ENCODE measurements at regions of chr5 and their contacts with region 1.

Region 1: DNA sequence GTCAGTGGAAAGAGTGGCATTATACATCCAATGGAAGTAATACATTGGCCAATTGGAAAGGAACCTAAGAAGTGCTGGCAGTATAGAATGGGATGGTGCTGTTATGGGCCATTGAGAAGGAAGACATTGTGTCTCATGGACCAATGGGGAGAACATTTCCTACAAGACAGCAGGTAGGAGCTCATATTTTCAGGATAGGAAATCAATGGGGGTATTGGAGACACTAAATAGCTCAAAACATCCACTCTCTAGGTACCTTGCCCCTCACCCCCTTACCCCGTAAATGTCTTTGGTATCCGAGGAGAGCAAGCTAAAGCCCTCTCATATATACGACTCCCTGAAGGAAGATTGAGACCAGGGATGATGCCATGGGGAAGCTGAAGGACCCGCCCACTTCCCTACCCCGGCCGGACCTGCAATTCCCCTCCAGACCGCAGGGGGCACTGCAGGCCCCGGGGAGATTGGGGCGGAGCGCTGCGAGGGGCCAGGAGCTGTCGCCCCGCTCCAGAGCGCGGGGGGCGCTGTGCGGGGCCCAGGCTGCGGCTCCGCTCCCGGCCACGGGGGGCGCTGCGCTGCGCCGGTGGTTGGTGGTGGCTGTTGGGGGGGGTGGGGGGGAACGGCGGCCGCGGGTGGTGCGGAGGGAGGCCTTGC is at the start of gene KDM3B:
- DNase-seq: peak; percentile 93
- H3K4me3 Mint-ChIP-seq: peak within 1 kb of the TSS; percentile 100
- H3K27ac Mint-ChIP-seq: peak within 1 kb of the TSS; percentile 97
- H3K4me1 Mint-ChIP-seq: peaks cover 51% of the 10 kb centered on the region
- H3K27me3 Mint-ChIP-seq: peaks cover 3% of the 10 kb centered on the region
- total RNA-seq, gene KDM3B: 55.0 and 59.3 TPM in 2 replicates

Region 2: GRCh38 chr5:138331449-138332368 is 20.5 kb before region 1 on chr5 and contains the start of gene CDC25C:
- intact Hi-C with region 1: loop called (anchors 1 kb)
- DNase-seq: peak; percentile 97
- H3K4me3 Mint-ChIP-seq: peak within 1 kb of the TSS; percentile 85
- H3K27ac Mint-ChIP-seq: peak within 1 kb of the TSS; percentile 82
- H3K4me1 Mint-ChIP-seq: peaks cover 24% of the 10 kb centered on the region
- H3K27me3 Mint-ChIP-seq: no peaks in the 10 kb centered on the region
- total RNA-seq, gene CDC25C: 5.3 and 5.6 TPM in 2 replicates

Region 3: DNA sequence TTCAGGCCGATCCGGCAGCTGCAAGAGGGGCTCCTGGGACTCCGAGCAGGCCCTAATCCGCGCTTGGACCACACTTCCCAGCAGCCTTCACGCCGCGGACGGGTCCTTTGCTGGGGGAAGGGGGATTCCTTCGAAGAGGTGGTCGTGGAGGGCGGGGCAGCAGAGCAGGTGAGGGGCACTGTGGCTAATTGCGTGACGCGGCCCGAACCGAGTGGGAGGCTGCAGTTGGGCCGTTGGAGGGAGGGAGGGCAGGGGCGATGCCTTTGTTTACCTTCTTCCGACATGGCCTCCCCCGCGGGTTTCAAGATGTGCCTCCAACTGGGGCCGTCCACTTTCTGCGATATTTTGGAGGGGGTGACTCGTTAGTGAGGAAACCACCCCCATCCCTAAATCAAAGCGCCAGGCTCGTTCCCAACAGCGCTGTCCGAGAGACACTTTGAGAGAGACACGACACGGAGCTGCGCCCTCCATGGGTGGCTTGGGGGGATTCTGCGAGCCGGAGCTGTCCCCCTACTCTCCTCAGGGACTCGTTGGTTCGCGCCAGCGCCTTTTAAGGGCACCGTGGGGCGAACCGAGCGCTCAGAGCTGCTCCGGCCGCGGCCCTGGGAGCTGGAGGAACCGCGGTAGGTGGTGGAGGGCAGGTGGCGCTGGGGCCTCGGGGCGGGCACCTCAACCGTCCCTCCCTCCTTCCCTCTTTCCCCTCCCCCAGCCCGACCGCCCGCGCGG is 14.3 kb before region 1 on chr5 and contains the start of gene FAM53C:
- intact Hi-C with region 1: loop called (anchors 1 kb)
- DNase-seq: peak; percentile 90
- H3K4me3 Mint-ChIP-seq: peak within 1 kb of the TSS; percentile 94
- H3K27ac Mint-ChIP-seq: peak within 1 kb of the TSS; percentile 99
- H3K4me1 Mint-ChIP-seq: peaks cover 44% of the 10 kb centered on the region
- H3K27me3 Mint-ChIP-seq: no peaks in the 10 kb centered on the region
- total RNA-seq, gene FAM53C: 27.0 and 29.2 TPM in 2 replicates

Measured in activated T-helper 1 cell treated with anti-CD3 and anti-CD28 coated beads, Interleukin-12 subunit alpha, Interleukin-12 subunit beta, Interleukin-2, Interleukin-4 antibody, amounts not matched to agents 30 ng/mL and 10 ng/mL and 1 ng/mL, durations not matched to agents 14 hours and 24 hours and 36 hours (primary cell).